HepG2 (cell line): ENCODE measurements at regions of chr2 and their contacts with region 1.

Region 1: GRCh38 chr2:96065381-96065930 is 30.7 kb upstream of the GPAT2 start:
- DNase-seq: no peak
- ATAC-seq: no peak
- H3K4me3 ChIP-seq: no peak overlapping the region
- H3K27ac ChIP-seq: no peak overlapping the region
- H3K4me1 ChIP-seq: peaks cover 85% of the 10 kb centered on the region
- H3K27me3 ChIP-seq: no peaks in the 10 kb centered on the region
- CTCF ChIP-seq: no peak
- EP300 ChIP-seq: no peak
- POLR2A ChIP-seq: no peak
- RAD21 ChIP-seq: no peak

Region 2: DNA sequence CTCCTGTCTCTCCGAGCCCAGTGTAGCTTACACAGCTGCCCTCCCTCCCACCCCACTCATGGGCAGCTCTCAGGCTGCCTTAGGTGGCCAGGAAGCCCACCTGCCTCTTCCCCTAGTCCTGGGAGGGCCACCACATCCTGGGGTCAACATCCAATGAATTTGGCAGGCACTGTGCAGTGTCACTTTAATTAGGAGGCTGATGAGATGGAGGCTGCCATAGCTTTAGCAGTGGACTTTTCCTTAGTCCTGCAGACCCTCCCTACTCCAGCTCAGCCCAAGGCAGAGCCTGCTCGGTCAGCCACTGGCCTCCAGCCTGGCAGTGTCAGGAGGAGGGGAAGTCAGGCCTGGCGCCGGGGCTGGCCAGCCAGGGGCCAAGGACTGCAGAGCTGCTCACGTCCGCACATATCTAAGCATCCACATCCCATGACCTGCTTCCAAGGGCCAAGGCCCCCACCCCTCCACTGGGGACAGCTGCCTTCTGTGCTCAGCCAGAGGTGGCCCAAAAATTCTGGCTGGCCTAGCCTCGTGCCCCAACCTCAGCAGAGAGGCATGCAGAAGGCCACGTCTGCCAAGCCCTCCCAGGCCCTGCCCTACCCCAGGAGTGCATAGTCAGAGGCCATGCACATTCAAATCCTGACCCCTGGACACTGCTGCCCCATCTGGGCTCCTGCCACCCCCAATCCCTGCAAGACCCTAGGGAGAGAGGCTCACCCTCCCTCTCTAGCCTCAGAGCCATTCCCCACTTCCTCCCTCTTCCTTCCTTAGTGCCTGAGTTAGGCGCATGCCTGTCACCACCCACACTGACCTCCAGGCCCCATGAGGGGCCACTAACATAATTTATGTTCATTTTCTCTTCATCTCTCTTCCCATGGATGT is 17.8 kb after region 1 on chr2:
- CTCF ChIA-PET with region 1: no interaction called
- POLR2A ChIA-PET with region 1: no interaction called
- in situ Hi-C with region 1: no loop called
- intact Hi-C with region 1: no loop called
- DNase-seq: no peak
- ATAC-seq: peak; percentile 39
- H3K4me3 ChIP-seq: no peak overlapping the region
- H3K27ac ChIP-seq: no peak overlapping the region
- H3K4me1 ChIP-seq: no peaks in the 10 kb centered on the region
- H3K27me3 ChIP-seq: peaks cover 8 to 12% of the 10 kb centered on the region in 2 experiments; a peak in 4 of 5 replicates
- CTCF ChIP-seq: no peak
- EP300 ChIP-seq: no peak
- POLR2A ChIP-seq: no peak
- RAD21 ChIP-seq: no peak

Region 3: GRCh38 chr2:96116879-96117697 is 51.6 kb after region 1 on chr2:
- CTCF ChIA-PET with region 1: interaction called, 3 read pairs
- POLR2A ChIA-PET with region 1: no interaction called
- in situ Hi-C with region 1: no loop called
- intact Hi-C with region 1: loop called (anchors 10 kb)
- DNase-seq: no peak
- ATAC-seq: peak; percentile 85
- H3K4me3 ChIP-seq: peak overlapping the region; percentile 48 to 76 (median 53); a peak in 5 of 6 replicates
- H3K27ac ChIP-seq: no peak overlapping the region
- H3K4me1 ChIP-seq: 0 out of 2 replicates have a peak, but pooled peaks cover 5% of the 10 kb centered on the region
- H3K27me3 ChIP-seq: peaks cover 26 to 71% of the 10 kb centered on the region in 2 experiments
- CTCF ChIP-seq: peak; percentile 69
- EP300 ChIP-seq: no peak
- POLR2A ChIP-seq: no peak
- RAD21 ChIP-seq: peak; percentile 100

Region 4: GRCh38 chr2:96136129-96136720 is 70.8 kb after region 1 on chr2:
- CTCF ChIA-PET with region 1: no interaction called
- POLR2A ChIA-PET with region 1: no interaction called
- in situ Hi-C with region 1: no loop called
- intact Hi-C with region 1: no loop called
- DNase-seq: no peak
- ATAC-seq: no peak
- H3K4me3 ChIP-seq: no peak overlapping the region
- H3K27ac ChIP-seq: no peak overlapping the region
- H3K4me1 ChIP-seq: no peaks in the 10 kb centered on the region
- H3K27me3 ChIP-seq: peaks cover 29 to 73% of the 10 kb centered on the region in 2 experiments
- CTCF ChIP-seq: no peak
- EP300 ChIP-seq: no peak
- POLR2A ChIP-seq: no peak
- RAD21 ChIP-seq: no peak

Region 5: DNA sequence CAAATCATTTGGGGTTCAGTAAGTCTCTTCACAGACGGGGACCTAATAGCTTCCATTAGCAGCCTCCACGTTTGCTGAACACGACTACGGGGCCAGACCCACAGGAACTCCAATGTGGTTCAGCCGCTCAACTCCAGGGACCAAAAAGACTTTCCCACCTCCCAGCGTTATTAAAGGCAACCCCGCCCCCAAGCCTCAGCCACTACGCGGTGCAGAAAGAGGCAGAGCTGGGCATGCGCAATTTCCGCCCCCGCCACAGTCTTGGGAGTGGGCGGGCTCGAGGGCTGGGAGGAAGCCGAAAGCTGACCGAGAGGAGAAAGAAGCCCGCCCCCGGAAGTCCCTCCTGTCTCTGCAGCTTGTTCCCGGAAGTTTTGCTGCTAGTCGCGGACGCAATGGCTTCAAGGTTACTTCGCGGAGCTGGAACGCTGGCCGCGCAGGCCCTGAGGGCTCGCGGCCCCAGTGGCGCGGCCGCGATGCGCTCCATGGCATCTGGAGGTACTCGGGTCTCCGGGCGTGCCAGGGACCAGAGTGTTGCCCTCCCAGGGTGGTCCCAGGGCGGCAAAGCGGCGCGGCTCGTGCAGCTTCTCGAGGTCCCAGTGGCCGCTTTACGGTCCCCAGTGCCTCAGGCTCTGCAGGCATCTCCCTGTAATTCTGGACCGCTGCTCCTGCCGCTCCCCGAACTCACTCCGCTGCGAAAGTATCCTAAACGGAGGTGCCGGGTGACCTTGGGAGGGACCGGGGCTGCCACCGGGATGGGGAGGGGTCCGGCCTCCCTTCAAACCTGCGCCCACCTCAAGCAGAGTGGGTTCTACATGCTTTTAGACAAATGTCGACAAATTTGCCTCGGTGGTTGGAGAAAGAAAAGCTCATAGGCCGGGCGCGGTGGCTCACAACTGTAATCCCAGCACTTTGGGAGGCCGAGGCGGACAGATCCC is 1580.5 kb after region 1 on chr2 and contains the start of gene COX5B:
- CTCF ChIA-PET with region 1: no interaction called
- POLR2A ChIA-PET with region 1: interaction called, 25 read pairs
- in situ Hi-C with region 1: loop called (anchors 25 kb)
- intact Hi-C with region 1: no loop called
- DNase-seq: peak; percentile 98
- ATAC-seq: peak; percentile 96
- H3K4me3 ChIP-seq: peak within 1 kb of the TSS; percentile 98 to 100 (median 99)
- H3K27ac ChIP-seq: peak within 1 kb of the TSS; percentile 76
- H3K4me1 ChIP-seq: peaks cover 21% of the 10 kb centered on the region
- H3K27me3 ChIP-seq: no peaks in the 10 kb centered on the region; a peak in 1 of 5 replicates
- CTCF ChIP-seq: peak; percentile 29; the same call in 1 of the 2 replicates
- EP300 ChIP-seq: no peak; a peak in 1 of 4 replicates
- POLR2A ChIP-seq: peak; percentile 92 to 95
- RAD21 ChIP-seq: no peak; the same call in 1 of the 2 replicates
- total RNA-seq, gene COX5B: 453 and 457 TPM in 2 replicates

Region 6: GRCh38 chr2:97663965-97664635 is 1598.6 kb after region 1 on chr2 and contains the start of gene ACTR1B:
- CTCF ChIA-PET with region 1: no interaction called
- POLR2A ChIA-PET with region 1: interaction called, 5 read pairs
- in situ Hi-C with region 1: loop called (anchors 25 kb)
- intact Hi-C with region 1: no loop called
- DNase-seq: peak; percentile 98
- ATAC-seq: peak; percentile 91
- H3K4me3 ChIP-seq: peak within 1 kb of the TSS; percentile 80 to 96 (median 87)
- H3K27ac ChIP-seq: peak within 1 kb of the TSS; percentile 92
- H3K4me1 ChIP-seq: peaks cover 44% of the 10 kb centered on the region
- H3K27me3 ChIP-seq: no peaks in the 10 kb centered on the region; a peak in 1 of 5 replicates
- CTCF ChIP-seq: peak; percentile 52
- EP300 ChIP-seq: peak in 1 of 2 experiments; percentile 26; a peak in 1 of 4 replicates
- POLR2A ChIP-seq: peak; percentile 81 to 91
- RAD21 ChIP-seq: peak; percentile 54; the same call in 1 of the 2 replicates
- total RNA-seq, gene ACTR1B: 59.9 and 76.7 TPM in 2 replicates